CD4-positive, alpha-beta T cell (primary cell): ENCODE measurements at regions of chr1 and their contacts with region 1.

Region 1: GRCh38 chr1:112358798-112359408 is 37.1 kb upstream of the CTTNBP2NL start:
- DNase-seq: peak in 12 of 14 experiments; percentile 6 to 58 (median 28)
- ATAC-seq: peak; percentile 68
- H3K4me3 ChIP-seq: no peak overlapping the region
- H3K4me3 Mint-ChIP-seq: no peak overlapping the region
- H3K27ac ChIP-seq: no peak overlapping the region
- H3K27ac Mint-ChIP-seq: no peak overlapping the region
- H3K4me1 ChIP-seq: no peaks in the 10 kb centered on the region
- H3K4me1 Mint-ChIP-seq: no peaks in the 10 kb centered on the region
- H3K27me3 ChIP-seq: peaks cover 4 to 9% of the 10 kb centered on the region in 2 experiments
- H3K27me3 Mint-ChIP-seq: peaks cover 49% of the 10 kb centered on the region
- CTCF ChIP-seq: peak; percentile 69

Region 2: DNA sequence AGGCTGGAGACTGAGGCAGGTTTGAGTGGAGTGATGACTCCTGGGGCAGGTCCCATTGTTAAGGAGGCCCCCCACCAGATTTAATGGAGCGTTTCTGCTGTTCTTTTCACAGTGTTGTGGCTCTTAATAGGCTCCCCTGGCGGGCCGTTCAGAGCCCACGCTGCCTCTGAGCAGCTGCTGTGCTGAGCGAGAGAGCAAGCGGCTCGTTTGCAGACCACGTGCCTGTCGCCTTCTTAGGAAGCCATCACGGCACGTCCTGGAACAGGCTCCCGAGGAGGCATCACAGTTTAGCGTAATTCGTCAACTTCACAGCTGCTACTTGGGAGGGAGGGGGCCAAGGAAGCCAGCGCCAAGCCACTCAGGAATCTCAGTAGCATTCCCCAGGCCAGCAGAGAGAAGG is 33.4 kb before region 1 on chr1:
- CTCF ChIA-PET with region 1: no interaction called
- POLR2A ChIA-PET with region 1: no interaction called
- intact Hi-C with region 1: loop called in 1 of 2 experiments (anchors 1 kb)
- DNase-seq: no peak
- ATAC-seq: no peak
- H3K4me3 ChIP-seq: no peak overlapping the region
- H3K4me3 Mint-ChIP-seq: no peak overlapping the region
- H3K27ac ChIP-seq: no peak overlapping the region
- H3K27ac Mint-ChIP-seq: no peak overlapping the region
- H3K4me1 ChIP-seq: no peaks in the 10 kb centered on the region
- H3K4me1 Mint-ChIP-seq: no peaks in the 10 kb centered on the region
- H3K27me3 ChIP-seq: peaks cover 0 to 7% of the 10 kb centered on the region in 2 experiments
- H3K27me3 Mint-ChIP-seq: peaks cover 55% of the 10 kb centered on the region
- CTCF ChIP-seq: no peak

Region 3: GRCh38 chr1:112544011-112544688 is 185.2 kb after region 1 on chr1:
- CTCF ChIA-PET with region 1: no interaction called
- POLR2A ChIA-PET with region 1: no interaction called
- intact Hi-C with region 1: no loop called
- DNase-seq: peak in 1 of 14 experiments; percentile 11
- ATAC-seq: no peak
- H3K4me3 ChIP-seq: no peak overlapping the region
- H3K4me3 Mint-ChIP-seq: no peak overlapping the region
- H3K27ac ChIP-seq: no peak overlapping the region
- H3K27ac Mint-ChIP-seq: no peak overlapping the region
- H3K4me1 ChIP-seq: no peaks in the 10 kb centered on the region
- H3K4me1 Mint-ChIP-seq: no peaks in the 10 kb centered on the region
- H3K27me3 ChIP-seq: no peaks in the 10 kb centered on the region
- H3K27me3 Mint-ChIP-seq: no peaks in the 10 kb centered on the region
- CTCF ChIP-seq: no peak